Activated naive CD8-positive, alpha-beta T cell treated with anti-CD3 and anti-CD28 coated beads, Interleukin-2, amount 10 ng/mL, durations not matched to agents 7 days and 5 days (primary cell): ENCODE measurements at regions of chr2 and their contacts with region 1.

Region 1: DNA sequence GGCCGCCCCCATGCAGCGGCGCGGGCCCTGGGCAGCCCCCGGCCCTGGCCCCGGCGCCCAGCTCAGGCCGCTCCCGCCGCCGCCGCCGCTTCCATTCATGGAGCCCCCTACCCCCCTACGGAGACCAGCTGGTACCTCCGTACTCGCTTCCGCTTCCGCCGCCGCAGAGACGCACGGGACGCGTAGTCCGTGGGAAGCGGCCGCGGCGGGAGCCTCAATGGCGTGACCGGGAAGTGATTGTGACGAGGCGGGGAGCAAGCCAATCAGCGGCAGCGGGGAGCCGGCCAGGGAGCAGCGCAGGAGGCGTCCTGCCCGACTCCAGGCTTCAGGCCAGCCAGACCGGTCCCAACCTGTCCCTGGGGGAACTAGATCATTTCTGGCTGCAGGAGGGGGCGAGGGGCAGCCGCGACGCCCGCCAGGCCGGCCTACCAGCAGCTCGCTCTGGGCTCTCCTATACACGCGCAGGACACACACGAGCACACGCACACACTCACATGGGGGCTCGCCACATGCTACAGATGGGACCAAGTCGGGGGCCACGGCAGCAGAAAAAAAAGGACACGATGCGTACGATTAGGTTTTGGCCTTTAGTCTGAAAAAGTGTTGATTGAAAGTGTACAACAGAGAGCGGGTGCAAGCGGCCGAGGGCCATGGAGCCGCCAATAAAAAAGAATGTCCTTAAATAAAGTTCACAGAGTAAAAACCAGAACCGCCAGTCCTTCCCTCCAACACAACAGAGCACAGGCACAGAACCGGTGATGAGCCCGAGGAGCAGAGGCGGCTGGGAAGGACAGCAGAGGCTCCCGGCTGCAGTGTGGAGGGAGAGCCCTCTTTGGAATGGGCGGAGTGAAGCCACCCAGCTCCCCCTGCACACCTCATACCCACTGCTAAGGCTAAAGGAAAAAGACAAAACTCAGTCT is at the start of gene ZNF513:
- DNase-seq: peak; percentile 90
- ATAC-seq: peak; percentile 89
- H3K4me3 Mint-ChIP-seq: peak within 1 kb of the TSS; percentile 79
- H3K27ac Mint-ChIP-seq: peak within 1 kb of the TSS; percentile 87
- H3K4me1 Mint-ChIP-seq: peaks cover 16% of the 10 kb centered on the region
- H3K27me3 Mint-ChIP-seq: no peaks in the 10 kb centered on the region
- total RNA-seq, gene ZNF513: 16.4 to 18.6 TPM

Region 2: GRCh38 chr2:27356382-27357181 is 24.3 kb before region 1 on chr2 and contains the start of gene GTF3C2:
- POLR2A ChIA-PET with region 1: interaction called, 15 read pairs
- DNase-seq: peak; percentile 88
- ATAC-seq: peak; percentile 80
- H3K4me3 Mint-ChIP-seq: peak within 1 kb of the TSS; percentile 97
- H3K27ac Mint-ChIP-seq: peak within 1 kb of the TSS; percentile 99
- H3K4me1 Mint-ChIP-seq: peaks cover 34% of the 10 kb centered on the region
- H3K27me3 Mint-ChIP-seq: no peaks in the 10 kb centered on the region
- total RNA-seq, gene GTF3C2: 66.4 to 70.8 TPM

Region 3: GRCh38 chr2:27428213-27428977 is 47.5 kb after region 1 on chr2 and contains the start of gene NRBP1:
- POLR2A ChIA-PET with region 1: interaction called, 20 read pairs
- DNase-seq: peak; percentile 98
- ATAC-seq: peak; percentile 88
- H3K4me3 Mint-ChIP-seq: peak within 1 kb of the TSS; percentile 99
- H3K27ac Mint-ChIP-seq: peak within 1 kb of the TSS; percentile 99
- H3K4me1 Mint-ChIP-seq: peaks cover 19% of the 10 kb centered on the region
- H3K27me3 Mint-ChIP-seq: peaks cover 2% of the 10 kb centered on the region
- total RNA-seq, gene NRBP1: 92.2 to 92.5 TPM